HCT116 (cell line): ENCODE measurements at regions of chr14 and their contacts with region 1.

Region 1: GRCh38 chr14:54488646-54489317 is at the start of gene GMFB:
- DNase-seq: peak; percentile 86
- ATAC-seq: peak; percentile 91
- H3K4me3 ChIP-seq: peak within 1 kb of the TSS; percentile 87 to 94
- H3K27ac ChIP-seq: peak within 1 kb of the TSS; percentile 96
- H3K4me1 ChIP-seq: peaks cover 21 to 38% of the 10 kb centered on the region in 2 experiments
- H3K27me3 ChIP-seq: no peaks in the 10 kb centered on the region
- CTCF ChIP-seq: peak; percentile 23 to 66 (median 54); a peak in 5 of 6 replicates
- POLR2A ChIP-seq: peak; percentile 46
- RAD21 ChIP-seq: peak; percentile 28; the same call in 1 of the 2 replicates
- total RNA-seq, gene GMFB: 53.8 TPM

Region 2: DNA sequence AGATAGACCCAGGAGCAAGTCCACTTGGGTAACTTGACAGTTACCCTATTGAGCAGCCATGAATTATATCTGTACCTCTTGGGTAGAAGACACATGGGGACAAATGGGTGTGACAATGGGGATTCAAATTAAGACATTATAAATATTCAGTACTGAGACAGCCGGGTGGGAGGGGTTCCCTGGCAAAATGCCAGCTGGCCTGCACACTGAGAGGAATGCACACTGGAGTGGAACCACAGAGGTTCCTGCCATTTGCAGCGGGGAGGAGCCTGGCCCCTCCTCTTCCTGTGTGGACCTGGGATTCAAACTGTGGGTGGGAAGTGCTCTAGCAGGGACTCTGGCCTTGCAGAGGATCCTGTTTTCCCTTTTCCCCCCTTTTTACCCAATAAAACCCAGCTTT is 210.7 kb before region 1 on chr14:
- CTCF ChIA-PET with region 1: no interaction called
- POLR2A ChIA-PET with region 1: no interaction called
- RAD21 ChIA-PET with region 1: no interaction called
- intact Hi-C with region 1: no loop called
- DNase-seq: no peak
- ATAC-seq: no peak
- H3K4me3 ChIP-seq: no peak overlapping the region
- H3K27ac ChIP-seq: no peak overlapping the region
- H3K4me1 ChIP-seq: no peaks in the 10 kb centered on the region
- H3K27me3 ChIP-seq: no peaks in the 10 kb centered on the region
- CTCF ChIP-seq: no peak
- POLR2A ChIP-seq: no peak
- RAD21 ChIP-seq: no peak

Region 3: GRCh38 chr14:54291491-54292191 is 197.1 kb before region 1 on chr14:
- CTCF ChIA-PET with region 1: no interaction called
- POLR2A ChIA-PET with region 1: no interaction called
- RAD21 ChIA-PET with region 1: no interaction called
- intact Hi-C with region 1: no loop called
- DNase-seq: no peak
- ATAC-seq: 0 out of 2 replicates have a peak, but pooled peaks have one; percentile 40
- H3K4me3 ChIP-seq: no peak overlapping the region
- H3K27ac ChIP-seq: peak overlapping the region; percentile 40; the same call in 1 of the 2 replicates
- H3K4me1 ChIP-seq: no peaks in the 10 kb centered on the region
- H3K27me3 ChIP-seq: no peaks in the 10 kb centered on the region
- CTCF ChIP-seq: no peak
- POLR2A ChIP-seq: no peak
- RAD21 ChIP-seq: no peak

Region 4: GRCh38 chr14:54509546-54510501 is 21.0 kb after region 1 on chr14 and contains the start of gene CGRRF1:
- CTCF ChIA-PET with region 1: interaction called, 7 read pairs
- POLR2A ChIA-PET with region 1: interaction called, 16 read pairs
- RAD21 ChIA-PET with region 1: no interaction called
- intact Hi-C with region 1: no loop called
- DNase-seq: peak; percentile 96
- ATAC-seq: peak; percentile 99
- H3K4me3 ChIP-seq: peak within 1 kb of the TSS; percentile 60 to 84
- H3K27ac ChIP-seq: peak within 1 kb of the TSS; percentile 49; the same call in 1 of the 2 replicates
- H3K4me1 ChIP-seq: peaks cover 5 to 18% of the 10 kb centered on the region in 2 experiments; a peak in 3 of 4 replicates
- H3K27me3 ChIP-seq: no peaks in the 10 kb centered on the region
- CTCF ChIP-seq: peak in 1 of 3 experiments; percentile 19; a peak in 2 of 6 replicates
- POLR2A ChIP-seq: peak; percentile 66
- RAD21 ChIP-seq: no peak
- total RNA-seq, gene CGRRF1: 15.9 TPM

Region 5: GRCh38 chr14:54756656-54757392 is 268.0 kb after region 1 on chr14:
- CTCF ChIA-PET with region 1: no interaction called
- POLR2A ChIA-PET with region 1: no interaction called
- RAD21 ChIA-PET with region 1: no interaction called
- intact Hi-C with region 1: no loop called
- DNase-seq: no peak
- ATAC-seq: no peak
- H3K4me3 ChIP-seq: no peak overlapping the region
- H3K27ac ChIP-seq: no peak overlapping the region
- H3K4me1 ChIP-seq: no peaks in the 10 kb centered on the region
- H3K27me3 ChIP-seq: no peaks in the 10 kb centered on the region
- CTCF ChIP-seq: no peak
- POLR2A ChIP-seq: no peak
- RAD21 ChIP-seq: no peak